ENCODE measurements at regions of chr10 and their contacts with region 1.

Region 1: DNA sequence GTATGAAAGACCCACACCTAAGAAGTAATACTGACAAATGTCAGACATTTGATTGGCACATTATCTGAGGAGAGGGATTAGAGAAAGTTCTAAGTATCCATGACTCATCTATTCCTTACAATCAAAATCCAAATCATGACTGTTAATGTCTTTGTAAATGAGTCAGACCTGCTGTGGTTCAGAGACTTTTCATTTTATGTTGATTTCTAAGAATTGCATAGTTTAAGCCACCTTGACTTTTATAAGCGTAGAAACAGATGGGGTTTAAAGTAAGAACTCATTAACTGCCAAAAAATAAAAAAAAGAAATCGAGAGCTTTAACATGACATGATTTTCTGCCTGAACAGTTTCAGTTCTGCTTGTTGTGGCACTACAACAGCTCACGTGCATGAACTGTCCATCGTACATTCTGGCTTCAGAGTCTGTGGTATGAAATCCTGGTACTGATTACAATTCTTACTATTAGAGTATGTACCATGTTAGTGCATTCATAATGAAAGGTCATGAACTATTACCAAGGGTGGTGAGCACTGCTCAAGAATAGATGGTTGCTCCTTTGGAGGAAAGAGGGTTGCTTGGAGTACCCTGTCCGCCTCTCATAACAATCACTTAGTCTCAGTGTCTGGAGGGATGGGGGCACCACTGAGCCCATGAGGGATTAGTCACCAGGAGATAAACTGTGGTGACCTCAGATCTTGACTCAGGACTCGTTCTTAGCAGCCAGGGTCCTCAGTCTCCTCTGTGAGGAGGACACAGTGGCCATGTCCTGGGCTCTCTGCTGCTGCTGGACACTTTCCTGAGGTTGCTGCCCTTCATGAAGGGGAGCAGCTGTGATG is 42.2 kb downstream of the ACSM6 start:
- DNase-seq: no peak
- H3K4me3 Mint-ChIP-seq: peak overlapping the region; percentile 15
- H3K27ac Mint-ChIP-seq: peak overlapping the region; percentile 80
- H3K4me1 Mint-ChIP-seq: peaks cover 49% of the 10 kb centered on the region
- H3K27me3 Mint-ChIP-seq: no peaks in the 10 kb centered on the region

Region 2: DNA sequence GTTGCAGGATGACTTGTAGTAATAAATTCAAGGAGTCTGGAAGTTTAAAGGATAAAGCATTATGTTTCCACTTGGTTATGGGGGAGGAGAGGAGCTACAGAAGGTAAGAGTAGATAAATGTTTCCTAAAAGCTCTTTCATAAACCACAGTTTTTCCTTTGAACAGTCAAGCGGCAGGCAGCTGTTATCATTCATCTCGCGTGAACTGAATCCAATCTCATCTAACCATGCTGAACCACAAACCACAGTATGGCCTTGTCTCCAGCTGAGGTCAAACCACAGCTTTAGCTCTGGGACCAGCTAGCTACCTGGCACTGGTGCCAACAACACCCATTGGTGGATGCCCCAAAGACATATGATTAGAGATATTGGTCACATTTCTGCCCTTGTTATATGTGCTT is 936.9 kb before region 1 on chr10:
- intact Hi-C with region 1: loop called (anchors 10 kb)
- DNase-seq: peak; percentile 57
- H3K4me3 Mint-ChIP-seq: no peak overlapping the region
- H3K27ac Mint-ChIP-seq: no peak overlapping the region
- H3K4me1 Mint-ChIP-seq: peaks cover 23% of the 10 kb centered on the region
- H3K27me3 Mint-ChIP-seq: peaks cover 62% of the 10 kb centered on the region

Region 3: GRCh38 chr10:94607111-94607510 is 629.2 kb before region 1 on chr10:
- intact Hi-C with region 1: loop called (anchors 5 kb)
- DNase-seq: no peak
- H3K4me3 Mint-ChIP-seq: no peak overlapping the region
- H3K27ac Mint-ChIP-seq: peak overlapping the region; percentile 82
- H3K4me1 Mint-ChIP-seq: peaks cover 20% of the 10 kb centered on the region
- H3K27me3 Mint-ChIP-seq: no peaks in the 10 kb centered on the region

Region 4: DNA sequence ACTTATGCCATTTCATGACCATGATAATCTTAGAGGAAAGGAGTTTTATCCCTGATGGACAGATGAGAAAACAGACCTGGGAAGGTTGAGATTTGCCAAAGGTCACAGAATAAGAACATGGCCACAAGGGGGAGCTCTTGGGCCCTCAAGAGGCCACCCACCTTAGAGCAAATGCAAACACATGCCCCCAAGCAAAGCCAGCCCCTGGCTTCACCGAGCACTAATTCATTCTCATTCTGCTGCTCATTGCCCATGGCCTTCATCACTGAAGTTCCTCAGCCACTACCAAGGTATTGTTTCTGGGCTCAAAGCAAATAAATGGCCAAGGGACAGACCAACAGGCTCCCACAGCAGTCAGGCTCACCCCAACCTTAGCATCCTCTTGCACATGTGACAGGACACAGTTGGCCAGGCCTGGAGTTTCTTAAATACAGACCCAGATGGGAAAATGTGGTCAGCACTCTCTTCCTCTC is 10.3 kb after region 1 on chr10:
- intact Hi-C with region 1: loop called (anchors 1 kb)
- DNase-seq: peak; percentile 50
- H3K4me3 Mint-ChIP-seq: no peak overlapping the region
- H3K27ac Mint-ChIP-seq: no peak overlapping the region
- H3K4me1 Mint-ChIP-seq: peaks cover 33% of the 10 kb centered on the region
- H3K27me3 Mint-ChIP-seq: peaks cover 2% of the 10 kb centered on the region

Region 5: DNA sequence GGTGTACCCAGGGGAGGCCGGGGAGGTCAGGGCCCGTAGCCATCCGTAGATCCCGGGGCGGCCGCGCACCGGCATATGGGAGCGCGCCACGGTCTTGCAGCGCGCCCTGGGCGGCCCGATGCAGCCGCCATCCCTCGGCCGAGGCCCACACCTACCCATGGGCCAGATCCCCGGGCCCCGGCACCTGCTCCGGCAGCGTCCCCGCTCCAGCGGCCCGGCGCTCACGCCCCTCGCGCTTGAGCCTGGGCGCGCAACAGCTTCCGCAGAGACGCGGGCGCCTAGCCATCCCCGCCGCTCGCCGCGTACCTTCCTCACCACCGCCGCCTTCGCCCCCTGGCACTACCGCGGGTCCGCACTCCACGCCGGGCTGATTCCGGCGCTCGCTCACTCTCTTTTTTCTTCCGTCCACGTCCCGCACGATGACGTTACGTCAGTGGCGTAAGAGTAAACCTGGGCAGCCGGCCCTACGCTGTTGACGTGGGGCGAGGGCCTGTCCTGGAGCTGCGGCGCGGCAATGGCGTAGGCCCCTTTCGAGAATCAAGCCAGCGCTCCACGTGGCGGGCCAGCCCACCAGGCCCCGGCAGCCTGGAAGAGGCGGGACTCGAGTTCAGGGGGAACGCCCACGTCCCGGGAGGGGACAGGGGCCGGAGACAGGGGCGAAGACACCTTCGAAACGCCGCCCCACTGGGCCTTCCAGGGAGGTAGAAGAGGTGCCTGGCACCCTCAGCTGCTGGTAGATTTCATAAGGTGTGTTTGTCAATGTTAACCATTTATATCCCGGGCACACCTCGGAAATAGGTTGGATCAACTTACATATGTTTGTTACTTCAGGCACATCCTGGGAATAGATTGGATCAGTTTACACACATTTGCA is 420.2 kb after region 1 on chr10 and contains the start of gene ALDH18A1:
- intact Hi-C with region 1: loop called (anchors 10 kb)
- DNase-seq: peak; percentile 87
- H3K4me3 Mint-ChIP-seq: peak within 1 kb of the TSS; percentile 97
- H3K27ac Mint-ChIP-seq: peak within 1 kb of the TSS; percentile 97
- H3K4me1 Mint-ChIP-seq: peaks cover 17% of the 10 kb centered on the region
- H3K27me3 Mint-ChIP-seq: no peaks in the 10 kb centered on the region
- total RNA-seq, gene ALDH18A1: 121 and 127 TPM in 2 replicates

Measured in activated T-helper 2 cell treated with anti-CD3 and anti-CD28 coated beads, Interferon-gamma antibody, Interleukin-2, Interleukin-4, amounts not matched to agents 10 μg/mL and 5 μg/mL and 100 μg/mL, durations not matched to agents 14 hours and 24 hours and 36 hours (primary cell).